ENCODE measurements at regions of chr9 and their contacts with region 1.

Region 1: GRCh38 chr9:101458955-101459631 is 23.5 kb upstream of the ALDOB start:
- DNase-seq: peak; percentile 77
- H3K4me3 ChIP-seq: no peak overlapping the region
- H3K27ac ChIP-seq: no peak overlapping the region
- H3K4me1 ChIP-seq: no peaks in the 10 kb centered on the region
- H3K27me3 ChIP-seq: peaks cover 0 to 2% of the 10 kb centered on the region in 2 experiments
- CTCF ChIP-seq: peak; percentile 45 to 71
- POLR2A ChIP-seq: no peak

Region 2: GRCh38 chr9:100515578-100516494 is 943.3 kb before region 1 on chr9:
- CTCF ChIA-PET with region 1: no interaction called
- POLR2A ChIA-PET with region 1: no interaction called
- dilution Hi-C with region 1: no loop called
- intact Hi-C with region 1: no loop called
- DNase-seq: no peak
- H3K4me3 ChIP-seq: no peak overlapping the region
- H3K27ac ChIP-seq: no peak overlapping the region
- H3K4me1 ChIP-seq: no peaks in the 10 kb centered on the region
- H3K27me3 ChIP-seq: no peaks in the 10 kb centered on the region
- CTCF ChIP-seq: no peak
- POLR2A ChIP-seq: no peak

Region 3: GRCh38 chr9:101566904-101567724 is 108.0 kb after region 1 on chr9:
- CTCF ChIA-PET with region 1: interaction called, 17 read pairs
- POLR2A ChIA-PET with region 1: no interaction called
- dilution Hi-C with region 1: no loop called
- intact Hi-C with region 1: no loop called
- DNase-seq: peak; percentile 24
- H3K4me3 ChIP-seq: no peak overlapping the region
- H3K27ac ChIP-seq: no peak overlapping the region
- H3K4me1 ChIP-seq: no peaks in the 10 kb centered on the region
- H3K27me3 ChIP-seq: no peaks in the 10 kb centered on the region
- CTCF ChIP-seq: peak; percentile 10 to 47
- POLR2A ChIP-seq: no peak